Activated CD4-positive, alpha-beta T cell treated with anti-CD3 and anti-CD28 coated beads for 36 hours (primary cell): ENCODE measurements at regions of chr5 and their contacts with region 1.

Region 1: GRCh38 chr5:6820851-6821479 is 107.7 kb downstream of the TENT4A start:
- DNase-seq: peak; percentile 82
- ATAC-seq: peak; percentile 70
- H3K4me3 Mint-ChIP-seq: no peak overlapping the region
- H3K27ac Mint-ChIP-seq: no peak overlapping the region
- H3K4me1 Mint-ChIP-seq: no peaks in the 10 kb centered on the region
- H3K27me3 Mint-ChIP-seq: peaks cover 25% of the 10 kb centered on the region

Region 2: GRCh38 chr5:6886866-6887265 is 65.9 kb after region 1 on chr5:
- CTCF ChIA-PET with region 1: no interaction called
- POLR2A ChIA-PET with region 1: no interaction called
- intact Hi-C with region 1: no loop called
- DNase-seq: no peak
- ATAC-seq: no peak
- H3K4me3 Mint-ChIP-seq: no peak overlapping the region
- H3K27ac Mint-ChIP-seq: no peak overlapping the region
- H3K4me1 Mint-ChIP-seq: no peaks in the 10 kb centered on the region
- H3K27me3 Mint-ChIP-seq: no peaks in the 10 kb centered on the region

Region 3: GRCh38 chr5:6948562-6948961 is 127.6 kb after region 1 on chr5:
- CTCF ChIA-PET with region 1: no interaction called
- POLR2A ChIA-PET with region 1: no interaction called
- intact Hi-C with region 1: loop called in 1 of 2 experiments (anchors 5 kb)
- DNase-seq: no peak
- ATAC-seq: no peak
- H3K4me3 Mint-ChIP-seq: no peak overlapping the region
- H3K27ac Mint-ChIP-seq: no peak overlapping the region
- H3K4me1 Mint-ChIP-seq: peaks cover 2% of the 10 kb centered on the region
- H3K27me3 Mint-ChIP-seq: peaks cover 16% of the 10 kb centered on the region

Region 4: GRCh38 chr5:7078901-7079300 is 257.9 kb after region 1 on chr5:
- CTCF ChIA-PET with region 1: interaction called, 3 read pairs
- POLR2A ChIA-PET with region 1: no interaction called
- intact Hi-C with region 1: loop called in 1 of 2 experiments (anchors 5 kb)
- DNase-seq: peak; percentile 17
- ATAC-seq: no peak
- H3K4me3 Mint-ChIP-seq: no peak overlapping the region
- H3K27ac Mint-ChIP-seq: no peak overlapping the region
- H3K4me1 Mint-ChIP-seq: no peaks in the 10 kb centered on the region
- H3K27me3 Mint-ChIP-seq: peaks cover 3% of the 10 kb centered on the region

Region 5: DNA sequence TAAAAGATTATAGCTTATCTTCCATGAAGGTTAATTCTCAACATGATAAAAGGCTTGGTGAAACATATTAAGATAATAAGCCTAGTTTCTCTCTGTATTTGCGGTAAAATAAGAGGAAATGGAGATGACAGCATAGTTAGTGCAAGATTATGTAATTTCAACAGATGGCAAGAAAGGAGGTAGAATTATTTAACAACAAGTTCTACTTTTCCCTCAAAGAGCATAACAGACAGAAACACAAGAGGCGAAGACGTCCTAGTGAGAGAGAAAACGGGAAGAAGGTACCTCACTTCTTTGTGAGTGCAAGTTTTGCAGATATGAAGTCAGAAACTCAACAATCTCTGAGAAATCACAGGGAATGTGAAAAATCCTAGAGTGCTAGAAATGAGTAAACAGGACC is 430.2 kb after region 1 on chr5:
- CTCF ChIA-PET with region 1: no interaction called
- POLR2A ChIA-PET with region 1: no interaction called
- intact Hi-C with region 1: loop called in 1 of 2 experiments (anchors 5 kb)
- DNase-seq: no peak
- ATAC-seq: no peak
- H3K4me3 Mint-ChIP-seq: no peak overlapping the region
- H3K27ac Mint-ChIP-seq: no peak overlapping the region
- H3K4me1 Mint-ChIP-seq: no peaks in the 10 kb centered on the region
- H3K27me3 Mint-ChIP-seq: peaks cover 9% of the 10 kb centered on the region

Region 6: DNA sequence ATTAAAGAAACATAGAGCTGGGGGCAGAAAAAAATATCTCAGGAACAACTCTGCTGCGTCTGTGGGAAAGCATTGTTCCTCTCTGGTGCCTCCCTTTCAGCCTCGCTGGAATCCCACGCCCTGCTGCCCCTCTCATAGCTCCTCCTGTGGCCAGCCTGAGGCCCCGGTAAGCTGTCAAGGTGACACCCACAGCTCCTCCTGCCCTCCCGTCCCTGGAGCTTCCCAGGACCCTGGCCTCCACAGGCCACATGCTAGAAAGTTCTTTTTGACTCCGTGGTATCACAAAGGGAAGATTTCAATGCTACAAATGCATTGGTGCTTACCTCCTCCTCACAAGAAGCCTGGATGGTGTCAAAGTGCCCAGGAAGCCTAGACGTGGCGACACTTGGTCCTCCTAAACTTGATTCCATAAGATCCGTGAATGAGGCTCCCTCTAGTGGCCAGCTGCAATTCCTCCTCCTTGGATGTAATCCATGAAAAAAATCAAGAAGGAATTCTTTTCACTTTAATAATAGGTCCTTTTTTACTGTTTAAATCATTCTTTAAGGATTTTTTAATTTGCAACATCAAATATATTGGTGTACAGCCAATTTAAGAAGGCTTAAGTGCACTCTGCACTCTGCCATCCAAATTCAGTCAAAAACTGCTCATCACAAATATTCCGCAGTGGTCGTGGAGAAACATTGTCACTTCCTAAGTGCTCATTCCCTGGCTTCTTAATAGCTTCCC is 925.1 kb after region 1 on chr5:
- CTCF ChIA-PET with region 1: interaction called, 5 read pairs
- POLR2A ChIA-PET with region 1: no interaction called
- intact Hi-C with region 1: loop called (anchors 5 to 10 kb)
- DNase-seq: peak; percentile 69
- ATAC-seq: no peak
- H3K4me3 Mint-ChIP-seq: no peak overlapping the region
- H3K27ac Mint-ChIP-seq: no peak overlapping the region
- H3K4me1 Mint-ChIP-seq: no peaks in the 10 kb centered on the region
- H3K27me3 Mint-ChIP-seq: peaks cover 8% of the 10 kb centered on the region